Heart left ventricle (tissue), 16 donors: ENCODE measurements at regions of chr4 and their contacts with region 1.

Region 1: GRCh38 chr4:26899991-26900390 is 39.4 kb downstream of the STIM2 start:
- DNase-seq: no peak
- ATAC-seq: peak in 1 of 4 donors; percentile 41
- H3K4me3 ChIP-seq: no peak overlapping the region
- H3K27ac ChIP-seq: peak overlapping the region in 3 of 12 donors; percentile 11 to 39 (median 12)
- H3K4me1 ChIP-seq: peaks cover 0 to 43% (median 11%) of the 10 kb centered on the region in 12 donors
- H3K27me3 ChIP-seq: no peaks in the 10 kb centered on the region
- CTCF ChIP-seq: no peak
- POLR2A ChIP-seq: no peak

Region 2: GRCh38 chr4:26867914-26868684 is 31.9 kb before region 1 on chr4:
- intact Hi-C with region 1: loop called in 2 of 10 experiments (anchors 5 kb)
- DNase-seq: no peak
- ATAC-seq: peak in 3 of 4 donors; percentile 29 to 65 (median 33)
- H3K4me3 ChIP-seq: peak overlapping the region in 1 of 12 donors; percentile 3
- H3K27ac ChIP-seq: peak overlapping the region in 7 of 12 donors; percentile 2 to 69 (median 36)
- H3K4me1 ChIP-seq: peaks cover 0 to 80% (median 23%) of the 10 kb centered on the region in 12 donors
- H3K27me3 ChIP-seq: no peaks in the 10 kb centered on the region
- CTCF ChIP-seq: no peak
- POLR2A ChIP-seq: no peak